Activated naive CD4-positive, alpha-beta T cell treated with anti-CD3 and anti-CD28 coated beads for 36 hours (primary cell): ENCODE measurements at regions of chr7 and their contacts with region 1.

Region 1: GRCh38 chr7:77536413-77537135 is 521 bp upstream of the PTPN12 start:
- DNase-seq: peak; percentile 98
- H3K4me3 Mint-ChIP-seq: peak overlapping the region; percentile 98
- H3K27ac Mint-ChIP-seq: peak overlapping the region; percentile 84
- H3K4me1 Mint-ChIP-seq: peaks cover 7% of the 10 kb centered on the region
- H3K27me3 Mint-ChIP-seq: no peaks in the 10 kb centered on the region

Region 2: GRCh38 chr7:76393116-76394031 is 1143.2 kb before region 1 on chr7:
- CTCF ChIA-PET with region 1: no interaction called
- intact Hi-C with region 1: loop called (anchors 10 kb)
- DNase-seq: peak; percentile 89
- H3K4me3 Mint-ChIP-seq: peak overlapping the region; percentile 85
- H3K27ac Mint-ChIP-seq: peak overlapping the region; percentile 92
- H3K4me1 Mint-ChIP-seq: peaks cover 23% of the 10 kb centered on the region
- H3K27me3 Mint-ChIP-seq: no peaks in the 10 kb centered on the region

Region 3: DNA sequence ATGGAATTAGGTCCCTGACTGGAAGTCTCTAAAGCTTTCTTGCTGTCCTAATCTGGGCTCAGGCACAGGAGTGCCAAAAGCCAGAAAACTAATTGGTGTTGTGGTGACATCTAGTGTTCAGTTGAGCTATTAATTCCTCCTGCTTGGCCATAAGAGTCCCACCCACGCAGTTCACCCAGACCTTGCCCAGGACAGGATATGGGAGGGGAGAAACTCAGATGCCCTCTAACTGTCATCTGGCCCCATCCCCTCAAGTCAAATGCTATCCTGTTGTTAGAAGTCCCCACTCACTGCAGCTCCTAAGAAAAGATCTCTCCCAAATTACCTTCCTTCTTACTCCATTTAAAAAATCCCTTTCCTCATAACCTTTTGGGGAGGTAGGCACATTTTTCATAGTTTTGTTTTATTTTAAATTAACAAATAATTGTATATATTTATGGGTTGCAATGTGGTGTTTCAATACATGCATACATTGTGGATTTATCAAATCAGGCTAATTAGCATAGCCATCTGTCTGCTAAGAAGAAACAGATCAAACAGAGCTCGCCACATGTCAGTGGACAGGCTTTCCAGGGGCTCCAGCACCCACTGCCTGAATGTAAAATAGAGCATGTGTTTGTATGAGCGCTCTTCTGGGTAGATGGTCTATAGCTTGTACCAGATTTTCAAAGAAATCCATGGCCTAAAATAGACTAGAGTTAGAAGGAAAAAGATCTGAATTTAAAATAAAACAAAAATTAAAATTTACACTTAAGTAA is 204.5 kb before region 1 on chr7:
- CTCF ChIA-PET with region 1: no interaction called
- intact Hi-C with region 1: loop called (anchors 2 kb)
- DNase-seq: peak; percentile 74
- H3K4me3 Mint-ChIP-seq: no peak overlapping the region
- H3K27ac Mint-ChIP-seq: no peak overlapping the region
- H3K4me1 Mint-ChIP-seq: peaks cover 44% of the 10 kb centered on the region
- H3K27me3 Mint-ChIP-seq: no peaks in the 10 kb centered on the region

Region 4: GRCh38 chr7:77393269-77393668 is 143.3 kb before region 1 on chr7:
- CTCF ChIA-PET with region 1: interaction called, 3 read pairs
- intact Hi-C with region 1: loop called (anchors 1 kb)
- DNase-seq: peak; percentile 77
- H3K4me3 Mint-ChIP-seq: no peak overlapping the region
- H3K27ac Mint-ChIP-seq: peak overlapping the region; percentile 63
- H3K4me1 Mint-ChIP-seq: peaks cover 37% of the 10 kb centered on the region
- H3K27me3 Mint-ChIP-seq: no peaks in the 10 kb centered on the region

Region 5: GRCh38 chr7:77460057-77460486 is 76.5 kb before region 1 on chr7:
- CTCF ChIA-PET with region 1: no interaction called
- intact Hi-C with region 1: loop called (anchors 5 kb)
- DNase-seq: no peak
- H3K4me3 Mint-ChIP-seq: no peak overlapping the region
- H3K27ac Mint-ChIP-seq: no peak overlapping the region
- H3K4me1 Mint-ChIP-seq: peaks cover 14% of the 10 kb centered on the region
- H3K27me3 Mint-ChIP-seq: no peaks in the 10 kb centered on the region